GM12878 (cell line): ENCODE measurements at regions of chr2 and their contacts with region 1.

Region 1: GRCh38 chr2:152861349-152861942 is 143.0 kb downstream of the ARL6IP6 start:
- DNase-seq: no peak
- ATAC-seq: peak; percentile 70
- H3K4me3 ChIP-seq: no peak overlapping the region
- H3K27ac ChIP-seq: no peak overlapping the region
- H3K4me1 ChIP-seq: no peaks in the 10 kb centered on the region
- H3K27me3 ChIP-seq: no peaks in the 10 kb centered on the region
- CTCF ChIP-seq: peak; percentile 23 to 66 (median 38)
- EP300 ChIP-seq: no peak
- POLR2A ChIP-seq: no peak
- RAD21 ChIP-seq: peak; percentile 26; the same call in 1 of the 2 replicates

Region 2: GRCh38 chr2:152790883-152791282 is 70.6 kb before region 1 on chr2:
- CTCF ChIA-PET with region 1: no interaction called
- POLR2A ChIA-PET with region 1: no interaction called
- RAD21 ChIA-PET with region 1: no interaction called
- SMC1A ChIA-PET with region 1: no interaction called
- in situ Hi-C with region 1: no loop called
- intact Hi-C with region 1: no loop called
- DNase-seq: no peak
- ATAC-seq: no peak
- H3K4me3 ChIP-seq: no peak overlapping the region
- H3K27ac ChIP-seq: no peak overlapping the region
- H3K4me1 ChIP-seq: no peaks in the 10 kb centered on the region
- H3K27me3 ChIP-seq: no peaks in the 10 kb centered on the region; a peak in 1 of 4 replicates
- CTCF ChIP-seq: no peak
- EP300 ChIP-seq: no peak
- POLR2A ChIP-seq: no peak
- RAD21 ChIP-seq: no peak

Region 3: GRCh38 chr2:152835674-152836073 is 25.8 kb before region 1 on chr2:
- CTCF ChIA-PET with region 1: no interaction called
- POLR2A ChIA-PET with region 1: no interaction called
- RAD21 ChIA-PET with region 1: no interaction called
- SMC1A ChIA-PET with region 1: no interaction called
- in situ Hi-C with region 1: no loop called
- intact Hi-C with region 1: no loop called
- DNase-seq: no peak
- ATAC-seq: no peak
- H3K4me3 ChIP-seq: no peak overlapping the region
- H3K27ac ChIP-seq: no peak overlapping the region
- H3K4me1 ChIP-seq: no peaks in the 10 kb centered on the region
- H3K27me3 ChIP-seq: no peaks in the 10 kb centered on the region
- CTCF ChIP-seq: no peak
- EP300 ChIP-seq: no peak
- POLR2A ChIP-seq: no peak
- RAD21 ChIP-seq: no peak

Region 4: GRCh38 chr2:152846697-152847470 is 14.6 kb before region 1 on chr2:
- CTCF ChIA-PET with region 1: interaction called, 13 read pairs
- POLR2A ChIA-PET with region 1: no interaction called
- RAD21 ChIA-PET with region 1: no interaction called
- SMC1A ChIA-PET with region 1: no interaction called
- in situ Hi-C with region 1: no loop called
- intact Hi-C with region 1: no loop called
- DNase-seq: no peak
- ATAC-seq: no peak
- H3K4me3 ChIP-seq: no peak overlapping the region
- H3K27ac ChIP-seq: no peak overlapping the region
- H3K4me1 ChIP-seq: no peaks in the 10 kb centered on the region
- H3K27me3 ChIP-seq: no peaks in the 10 kb centered on the region
- CTCF ChIP-seq: no peak
- EP300 ChIP-seq: no peak
- POLR2A ChIP-seq: no peak
- RAD21 ChIP-seq: no peak

Region 5: GRCh38 chr2:152875701-152876695 is 14.6 kb after region 1 on chr2:
- CTCF ChIA-PET with region 1: interaction called, 15 read pairs
- POLR2A ChIA-PET with region 1: no interaction called
- RAD21 ChIA-PET with region 1: no interaction called
- SMC1A ChIA-PET with region 1: interaction called, 3 read pairs
- in situ Hi-C with region 1: no loop called
- intact Hi-C with region 1: no loop called
- DNase-seq: no peak
- ATAC-seq: no peak
- H3K4me3 ChIP-seq: no peak overlapping the region
- H3K27ac ChIP-seq: no peak overlapping the region
- H3K4me1 ChIP-seq: no peaks in the 10 kb centered on the region
- H3K27me3 ChIP-seq: no peaks in the 10 kb centered on the region
- CTCF ChIP-seq: no peak
- EP300 ChIP-seq: no peak
- POLR2A ChIP-seq: no peak
- RAD21 ChIP-seq: no peak